Activated T-helper 2 cell treated with anti-CD3 and anti-CD28 coated beads, Interferon-gamma antibody, Interleukin-2, Interleukin-4, amounts not matched to agents 10 μg/mL and 5 μg/mL and 100 μg/mL, durations not matched to agents 14 hours and 24 hours and 36 hours (primary cell): ENCODE measurements at regions of chr3 and their contacts with region 1.

Region 1: GRCh38 chr3:33883538-33883950 is 85.1 kb downstream of the PDCD6IP start:
- DNase-seq: no peak
- H3K4me3 Mint-ChIP-seq: no peak overlapping the region
- H3K27ac Mint-ChIP-seq: no peak overlapping the region
- H3K4me1 Mint-ChIP-seq: peaks cover 4% of the 10 kb centered on the region
- H3K27me3 Mint-ChIP-seq: peaks cover 2% of the 10 kb centered on the region

Region 2: GRCh38 chr3:33807190-33807589 is 76.4 kb before region 1 on chr3:
- intact Hi-C with region 1: no loop called
- DNase-seq: no peak
- H3K4me3 Mint-ChIP-seq: no peak overlapping the region
- H3K27ac Mint-ChIP-seq: no peak overlapping the region
- H3K4me1 Mint-ChIP-seq: peaks cover 43% of the 10 kb centered on the region
- H3K27me3 Mint-ChIP-seq: no peaks in the 10 kb centered on the region

Region 3: DNA sequence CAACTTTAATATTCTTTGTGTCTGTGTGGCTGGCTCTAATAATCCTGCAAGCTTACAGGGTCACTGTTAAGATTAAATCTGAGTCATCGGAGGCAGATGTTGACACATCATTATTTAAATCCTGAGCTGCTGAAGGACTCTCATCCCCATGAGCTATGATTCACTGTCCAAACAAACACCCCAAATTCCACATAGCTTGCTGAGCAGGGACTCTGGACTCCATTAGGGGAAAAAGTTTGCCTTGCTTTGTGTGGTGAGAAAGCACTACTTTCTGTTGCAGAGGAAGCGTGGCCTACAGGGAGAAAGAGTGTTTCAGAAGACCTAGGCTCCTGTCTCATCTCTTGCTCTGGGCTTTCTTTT is 128.5 kb after region 1 on chr3:
- intact Hi-C with region 1: loop called (anchors 10 kb)
- DNase-seq: no peak
- H3K4me3 Mint-ChIP-seq: no peak overlapping the region
- H3K27ac Mint-ChIP-seq: no peak overlapping the region
- H3K4me1 Mint-ChIP-seq: peaks cover 5% of the 10 kb centered on the region
- H3K27me3 Mint-ChIP-seq: peaks cover 6% of the 10 kb centered on the region

Region 4: GRCh38 chr3:34132069-34132692 is 248.6 kb after region 1 on chr3:
- intact Hi-C with region 1: no loop called
- DNase-seq: no peak
- H3K4me3 Mint-ChIP-seq: no peak overlapping the region
- H3K27ac Mint-ChIP-seq: no peak overlapping the region
- H3K4me1 Mint-ChIP-seq: no peaks in the 10 kb centered on the region
- H3K27me3 Mint-ChIP-seq: no peaks in the 10 kb centered on the region

Region 5: DNA sequence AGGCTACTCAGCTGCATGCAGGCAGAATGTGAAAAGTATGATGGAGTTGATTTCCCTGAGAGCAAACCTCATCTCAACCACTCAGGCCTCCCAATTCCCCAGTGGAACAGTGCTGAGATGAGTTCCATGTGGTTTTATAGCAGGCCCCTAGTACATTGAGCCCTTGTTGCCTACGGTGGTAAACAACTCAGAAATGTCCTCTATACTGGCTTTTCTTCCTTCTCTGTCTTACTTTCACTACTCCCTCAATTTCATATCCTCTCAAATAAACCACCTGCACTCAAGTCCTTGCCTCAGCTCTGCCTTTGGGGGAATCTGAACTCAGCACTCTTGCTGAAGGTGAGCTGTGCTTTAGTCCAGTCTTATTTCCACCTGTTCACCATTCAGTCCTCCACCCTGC is 314.8 kb after region 1 on chr3:
- intact Hi-C with region 1: no loop called
- DNase-seq: no peak
- H3K4me3 Mint-ChIP-seq: no peak overlapping the region
- H3K27ac Mint-ChIP-seq: no peak overlapping the region
- H3K4me1 Mint-ChIP-seq: no peaks in the 10 kb centered on the region
- H3K27me3 Mint-ChIP-seq: no peaks in the 10 kb centered on the region

Region 6: GRCh38 chr3:34683851-34684250 is 800.3 kb after region 1 on chr3:
- intact Hi-C with region 1: loop called (anchors 5 kb)
- DNase-seq: no peak
- H3K4me3 Mint-ChIP-seq: no peak overlapping the region
- H3K27ac Mint-ChIP-seq: no peak overlapping the region
- H3K4me1 Mint-ChIP-seq: no peaks in the 10 kb centered on the region
- H3K27me3 Mint-ChIP-seq: no peaks in the 10 kb centered on the region